ENCODE measurements at regions of chr3 and their contacts with region 1.

Region 1: GRCh38 chr3:152177757-152178156 is 91.0 kb upstream of the MBNL1 start:
- DNase-seq: no peak
- CTCF ChIP-seq: no peak

Region 2: GRCh38 chr3:151459358-151459757 is 718.4 kb before region 1 on chr3:
- CTCF ChIA-PET with region 1: no interaction called
- POLR2A ChIA-PET with region 1: no interaction called
- DNase-seq: no peak
- CTCF ChIP-seq: no peak

Region 3: DNA sequence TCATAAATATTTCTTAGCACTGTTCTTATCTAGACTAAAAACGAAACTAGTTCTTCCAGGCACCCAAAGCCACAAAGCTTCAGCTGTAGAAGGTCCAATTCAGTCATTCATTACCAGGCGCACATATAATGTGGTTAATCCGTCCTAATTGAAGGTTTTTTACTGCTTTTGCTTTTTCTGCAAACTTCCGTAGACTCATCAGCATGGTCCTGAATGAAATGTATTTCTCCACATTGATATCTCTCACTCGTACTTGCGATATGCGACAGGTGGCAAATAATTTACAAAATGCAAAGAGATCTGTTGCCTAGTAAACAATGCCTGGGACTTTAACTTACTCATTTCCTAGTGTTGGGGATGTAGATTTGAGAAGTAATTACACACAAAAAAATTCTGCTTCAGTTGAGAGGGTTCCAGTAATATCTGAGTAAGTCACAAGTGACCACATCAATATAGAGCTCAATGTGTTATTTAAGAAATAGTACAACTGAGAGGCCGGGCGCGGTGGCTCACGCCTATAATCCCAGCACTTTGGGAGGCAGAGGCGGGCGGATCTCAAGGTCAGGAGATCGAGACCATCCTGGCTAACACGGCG is 16.0 kb after region 1 on chr3:
- CTCF ChIA-PET with region 1: interaction called, 11 read pairs
- POLR2A ChIA-PET with region 1: no interaction called
- DNase-seq: peak; percentile 20
- CTCF ChIP-seq: no peak

Region 4: DNA sequence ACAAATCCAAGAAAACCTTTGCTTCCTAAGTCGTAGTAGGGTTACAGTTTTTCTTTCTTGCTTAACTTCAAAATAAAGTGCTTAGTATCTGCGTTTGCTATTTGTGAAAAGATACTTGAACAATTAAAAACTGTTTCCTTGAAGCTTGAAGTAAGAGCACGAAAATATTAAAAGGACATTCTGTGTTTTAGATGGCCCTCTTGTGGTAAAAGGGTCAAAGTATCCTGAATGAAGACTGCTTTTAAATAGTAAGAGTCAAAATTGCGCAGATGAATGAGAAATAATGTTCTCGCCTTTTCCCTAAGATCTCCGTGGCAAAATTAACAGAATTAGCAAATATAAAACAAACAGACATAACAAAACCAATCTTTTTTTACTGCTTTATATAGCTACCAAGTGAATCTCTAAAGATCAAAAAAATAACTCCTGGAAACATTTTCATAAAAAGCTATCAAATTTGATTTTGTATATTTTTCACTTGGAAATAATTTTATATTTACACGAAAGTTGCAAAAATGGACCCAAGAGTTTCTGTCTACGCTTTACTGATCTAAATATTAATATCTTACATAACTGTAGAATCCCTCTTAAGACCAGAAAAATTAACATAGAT is 266.4 kb after region 1 on chr3:
- CTCF ChIA-PET with region 1: interaction called, 14 read pairs
- POLR2A ChIA-PET with region 1: no interaction called
- DNase-seq: peak; percentile 17
- CTCF ChIP-seq: peak; percentile 60

Measured in GM10248 (cell line).